Calu3 (cell line): ENCODE measurements at regions of chr19 and their contacts with region 1.

Region 1: GRCh38 chr19:23420824-23421223 is 25.6 kb upstream of the ZNF91 start:
- DNase-seq: no peak
- H3K4me3 Mint-ChIP-seq: no peak overlapping the region
- H3K27ac Mint-ChIP-seq: no peak overlapping the region
- H3K4me1 Mint-ChIP-seq: no peaks in the 10 kb centered on the region
- H3K27me3 Mint-ChIP-seq: no peaks in the 10 kb centered on the region
- CTCF ChIP-seq: no peak

Region 2: GRCh38 chr19:23263870-23264590 is 156.8 kb before region 1 on chr19:
- CTCF ChIA-PET with region 1: no interaction called
- intact Hi-C with region 1: no loop called
- DNase-seq: no peak
- H3K4me3 Mint-ChIP-seq: no peak overlapping the region
- H3K27ac Mint-ChIP-seq: no peak overlapping the region
- H3K4me1 Mint-ChIP-seq: no peaks in the 10 kb centered on the region
- H3K27me3 Mint-ChIP-seq: no peaks in the 10 kb centered on the region
- CTCF ChIP-seq: no peak

Region 3: GRCh38 chr19:23774524-23774971 is 353.7 kb after region 1 on chr19:
- CTCF ChIA-PET with region 1: no interaction called
- intact Hi-C with region 1: loop called (anchors 10 kb)
- DNase-seq: no peak
- H3K4me3 Mint-ChIP-seq: no peak overlapping the region
- H3K27ac Mint-ChIP-seq: no peak overlapping the region
- H3K4me1 Mint-ChIP-seq: no peaks in the 10 kb centered on the region
- H3K27me3 Mint-ChIP-seq: no peaks in the 10 kb centered on the region
- CTCF ChIP-seq: no peak